CD8-positive, alpha-beta memory T cell (primary cell): ENCODE measurements at regions of chr15 and their contacts with region 1.

Region 1: GRCh38 chr15:88454867-88455810 is 12.0 kb downstream of the MRPL46 start:
- DNase-seq: peak in 1 of 5 donors; percentile 51
- H3K4me3 ChIP-seq: no peak overlapping the region
- H3K4me3 Mint-ChIP-seq: no peak overlapping the region
- H3K27ac ChIP-seq: no peak overlapping the region
- H3K27ac Mint-ChIP-seq: peak overlapping the region in 4 of 8 donors; percentile 26 to 79 (median 53)
- H3K4me1 ChIP-seq: no peaks in the 10 kb centered on the region
- H3K4me1 Mint-ChIP-seq: peaks cover 4 to 6% (median 5%) of the 10 kb centered on the region in 3 donors
- H3K27me3 ChIP-seq: no peaks in the 10 kb centered on the region
- H3K27me3 Mint-ChIP-seq: peaks cover 0 to 3% of the 10 kb centered on the region in 2 donors

Region 2: GRCh38 chr15:88419830-88420229 is 35.3 kb before region 1 on chr15:
- CTCF ChIA-PET with region 1: no interaction called
- POLR2A ChIA-PET with region 1: no interaction called
- DNase-seq: no peak
- H3K4me3 ChIP-seq: no peak overlapping the region
- H3K4me3 Mint-ChIP-seq: no peak overlapping the region
- H3K27ac ChIP-seq: no peak overlapping the region
- H3K27ac Mint-ChIP-seq: no peak overlapping the region
- H3K4me1 ChIP-seq: no peaks in the 10 kb centered on the region
- H3K4me1 Mint-ChIP-seq: no peaks in the 10 kb centered on the region
- H3K27me3 ChIP-seq: no peaks in the 10 kb centered on the region
- H3K27me3 Mint-ChIP-seq: peaks cover 12 to 36% of the 10 kb centered on the region in 2 donors

Region 3: GRCh38 chr15:88441076-88441730 is 13.9 kb before region 1 on chr15:
- CTCF ChIA-PET with region 1: no interaction called
- POLR2A ChIA-PET with region 1: no interaction called
- DNase-seq: no peak
- H3K4me3 ChIP-seq: no peak overlapping the region
- H3K4me3 Mint-ChIP-seq: no peak overlapping the region
- H3K27ac ChIP-seq: no peak overlapping the region
- H3K27ac Mint-ChIP-seq: no peak overlapping the region
- H3K4me1 ChIP-seq: no peaks in the 10 kb centered on the region
- H3K4me1 Mint-ChIP-seq: no peaks in the 10 kb centered on the region
- H3K27me3 ChIP-seq: peaks cover 4% of the 10 kb centered on the region
- H3K27me3 Mint-ChIP-seq: peaks cover 13 to 62% of the 10 kb centered on the region in 2 donors

Region 4: GRCh38 chr15:88467073-88467934 is 12.2 kb after region 1 on chr15 and contains the starts of genes MRPL46 and MRPS11:
- CTCF ChIA-PET with region 1: interaction called, 10 read pairs
- POLR2A ChIA-PET with region 1: no interaction called
- DNase-seq: peak; percentile 86 to 92 (median 89)
- H3K4me3 ChIP-seq: peak within 1 kb of the TSS; percentile 88
- H3K4me3 Mint-ChIP-seq: peak within 1 kb of the TSS in 6 of 7 donors; percentile 96 to 100 (median 98)
- H3K27ac ChIP-seq: peak within 1 kb of the TSS; percentile 91
- H3K27ac Mint-ChIP-seq: peak within 1 kb of the TSS; percentile 96 to 100 (median 99)
- H3K4me1 ChIP-seq: peaks cover 23% of the 10 kb centered on the region
- H3K4me1 Mint-ChIP-seq: peaks cover 28 to 35% (median 30%) of the 10 kb centered on the region in 3 donors
- H3K27me3 ChIP-seq: no peaks in the 10 kb centered on the region
- H3K27me3 Mint-ChIP-seq: peaks cover 0 to 2% of the 10 kb centered on the region in 2 donors
- total RNA-seq, gene MRPL46: 48.5 to 53.6 TPM
- total RNA-seq, gene MRPS11: 80.1 to 81.0 TPM